ENCODE measurements at regions of chr7 and their contacts with region 1.

Region 1: DNA sequence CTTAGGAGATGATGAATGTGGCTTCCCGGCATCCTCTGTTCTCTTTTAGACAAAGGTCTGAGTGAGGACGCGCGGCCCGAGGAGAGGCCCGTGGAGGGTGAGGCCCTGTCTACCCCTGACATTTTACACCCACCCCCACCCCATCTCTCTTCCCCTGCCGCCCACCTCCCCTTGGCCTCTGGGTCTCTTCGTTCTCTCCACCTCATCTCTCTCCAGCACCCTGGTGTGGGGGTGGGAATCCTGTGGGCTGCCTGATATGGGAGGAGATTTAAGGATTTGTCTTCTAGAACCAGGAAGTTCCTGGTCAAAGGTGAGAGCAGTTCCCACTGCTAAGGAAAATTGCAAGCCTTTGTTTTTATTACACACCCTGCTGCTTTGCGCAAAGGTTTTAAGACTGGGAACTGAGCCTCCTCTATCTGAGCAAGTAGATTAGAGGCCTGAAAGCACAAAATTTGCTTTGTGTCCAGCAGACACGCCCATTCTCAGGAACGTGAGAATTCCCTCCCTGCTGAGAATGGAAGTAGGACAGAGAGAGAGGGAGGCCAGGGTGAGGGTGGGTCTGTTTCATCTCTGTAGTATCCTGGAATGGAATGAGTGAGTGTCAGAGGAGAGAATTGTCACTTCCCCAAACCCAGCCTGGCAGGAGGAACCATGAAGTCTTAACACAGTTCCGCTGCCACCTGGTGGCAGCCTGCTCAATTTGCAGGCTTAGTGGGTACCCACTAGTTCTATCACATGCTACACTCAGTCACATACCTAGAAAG is 91.2 kb downstream of the GTF2IRD1 start:
- DNase-seq: no peak
- ATAC-seq: no peak

Region 2: DNA sequence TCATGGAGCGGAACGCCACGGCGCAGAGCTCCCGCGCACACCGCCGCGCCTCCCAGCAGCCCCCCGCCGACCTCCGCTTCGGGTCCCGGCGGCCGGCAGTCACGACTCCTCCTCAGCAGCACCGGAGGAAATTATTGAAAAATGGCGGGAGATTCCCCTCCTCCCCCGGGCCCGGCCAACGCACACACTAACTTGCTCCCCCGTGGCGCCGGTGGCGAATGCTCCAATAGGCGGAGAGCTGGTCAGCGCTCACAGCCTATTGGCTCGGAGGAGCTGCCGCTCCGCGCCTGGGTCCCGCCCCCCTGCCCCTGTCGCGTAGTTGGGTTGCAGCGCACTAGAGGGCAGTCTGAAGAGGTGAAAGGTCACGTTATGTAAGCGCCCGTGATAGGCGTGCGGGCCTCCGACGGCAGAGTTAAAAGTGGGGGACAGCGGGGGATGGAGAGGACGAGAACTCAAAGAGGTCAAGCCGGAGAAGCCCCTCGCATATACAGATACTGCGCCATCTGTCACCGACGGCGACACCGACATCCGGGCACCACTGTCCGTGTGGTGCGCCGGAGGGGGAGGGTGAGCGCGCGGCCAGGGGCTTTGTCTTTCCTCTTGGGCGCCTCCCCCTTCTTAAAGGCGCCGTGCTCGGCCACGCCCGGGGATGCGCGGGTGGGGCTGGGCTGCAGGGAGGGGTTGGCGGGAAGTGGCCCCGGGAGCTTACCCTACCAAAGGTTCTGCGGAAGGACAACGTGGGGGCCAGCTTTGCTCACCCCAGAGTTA is 1022.6 kb before region 1 on chr7 and contains the start of gene BAZ1B:
- intact Hi-C with region 1: no loop called
- DNase-seq: peak; percentile 99
- ATAC-seq: peak; percentile 98
- total RNA-seq, gene BAZ1B: 40.9 TPM

Region 3: GRCh38 chr7:74417419-74417971 is 127.4 kb before region 1 on chr7:
- intact Hi-C with region 1: loop called (anchors 5 kb)
- DNase-seq: peak; percentile 81
- ATAC-seq: peak; percentile 87